GM10248 (cell line): ENCODE measurements at regions of chr17 and their contacts with region 1.

Region 1: DNA sequence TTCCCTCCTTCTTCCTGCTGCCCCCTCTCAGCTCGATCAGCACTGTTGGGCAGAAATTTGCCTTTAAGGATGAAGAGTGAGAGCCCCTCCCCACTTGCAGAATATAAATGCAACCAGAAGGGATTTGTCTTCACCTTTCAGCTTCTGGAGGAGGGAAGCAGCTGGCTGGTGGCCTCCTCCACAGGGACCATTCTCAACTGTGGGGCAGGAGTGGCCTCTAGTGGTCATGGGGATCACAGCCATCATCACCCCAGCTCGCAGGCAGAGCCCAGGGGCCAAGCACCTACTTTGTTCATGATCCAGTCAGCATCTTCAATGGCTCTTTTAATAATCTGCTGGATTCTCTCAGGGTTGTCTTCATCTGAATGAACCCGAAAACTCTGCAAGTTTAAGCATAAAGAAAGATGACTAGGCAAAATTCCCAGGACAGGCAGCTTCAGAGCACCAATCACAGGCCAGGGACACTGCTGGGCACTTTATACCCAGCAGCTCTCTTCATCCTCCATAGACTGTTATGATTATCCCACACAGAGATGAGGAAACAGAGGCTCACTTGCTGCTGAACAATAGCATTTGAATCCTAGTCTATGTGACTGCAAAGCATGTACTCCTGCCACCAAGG is 13.1 kb downstream of the LYRM9 start:
- DNase-seq: peak; percentile 87
- CTCF ChIP-seq: peak; percentile 90

Region 2: GRCh38 chr17:27654654-27655524 is 225.2 kb before region 1 on chr17:
- CTCF ChIA-PET with region 1: interaction called, 23 read pairs
- POLR2A ChIA-PET with region 1: no interaction called
- DNase-seq: peak; percentile 85
- CTCF ChIP-seq: peak; percentile 82

Region 3: GRCh38 chr17:27768858-27769410 is 111.2 kb before region 1 on chr17:
- CTCF ChIA-PET with region 1: interaction called, 287 read pairs
- POLR2A ChIA-PET with region 1: no interaction called
- DNase-seq: no peak
- CTCF ChIP-seq: no peak

Region 4: DNA sequence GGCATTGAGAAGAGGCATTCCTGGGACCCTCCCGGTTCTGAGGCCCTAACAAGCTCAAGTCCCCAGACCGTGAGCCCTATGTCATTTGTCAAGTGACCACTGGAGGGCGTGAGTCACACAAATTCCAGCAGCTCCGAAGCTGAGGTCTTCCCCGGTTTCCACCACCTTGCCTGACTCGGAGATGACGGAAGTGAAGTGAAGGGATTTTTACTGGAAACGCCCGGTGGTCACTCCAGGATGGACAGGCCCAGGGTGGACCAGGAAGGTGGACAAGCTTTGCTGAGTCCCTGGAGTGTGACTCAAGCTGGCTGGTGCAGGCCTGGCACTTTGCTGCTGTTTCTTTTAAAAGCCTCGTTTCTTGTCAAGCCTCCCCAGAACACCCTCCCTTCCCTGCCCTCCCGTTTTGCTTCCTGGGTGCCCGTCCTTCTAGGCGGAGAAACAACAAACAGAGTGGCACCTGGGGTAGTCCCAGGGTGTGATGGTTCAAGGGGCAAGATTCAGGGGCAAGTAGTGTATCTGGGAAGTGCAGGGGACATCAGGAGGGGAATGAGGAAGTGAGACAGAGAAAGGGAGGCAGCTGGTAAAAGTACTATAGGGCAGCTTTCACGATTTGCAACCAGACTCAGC is 74.5 kb before region 1 on chr17:
- CTCF ChIA-PET with region 1: interaction called, 560 read pairs
- POLR2A ChIA-PET with region 1: interaction called, 7 read pairs
- DNase-seq: peak; percentile 82
- CTCF ChIP-seq: peak; percentile 82

Region 5: GRCh38 chr17:27846042-27846655 is 33.9 kb before region 1 on chr17:
- CTCF ChIA-PET with region 1: interaction called, 18 read pairs
- POLR2A ChIA-PET with region 1: no interaction called
- DNase-seq: no peak
- CTCF ChIP-seq: no peak

Region 6: DNA sequence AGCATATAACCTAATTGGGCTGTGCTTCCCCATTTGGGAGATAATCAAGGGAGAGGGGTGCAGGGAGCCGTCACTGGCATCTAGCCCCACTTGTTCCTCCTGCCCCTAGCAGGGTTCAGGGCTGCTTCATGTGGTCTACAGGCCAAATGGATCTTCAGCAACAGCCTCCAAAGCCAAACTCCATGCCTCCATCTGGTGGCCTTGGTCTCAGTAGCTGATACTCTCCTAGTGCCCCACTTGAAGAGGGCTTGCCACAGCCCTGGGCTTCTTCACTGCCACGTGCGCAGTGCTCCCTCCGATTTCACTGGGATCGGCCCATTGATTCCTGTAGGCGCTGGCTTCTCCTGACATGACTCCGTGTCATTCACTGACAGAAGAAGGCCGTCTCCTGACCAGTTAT is 11.5 kb before region 1 on chr17:
- CTCF ChIA-PET with region 1: interaction called, 20 read pairs
- POLR2A ChIA-PET with region 1: no interaction called
- DNase-seq: no peak
- CTCF ChIP-seq: peak; percentile 16

Region 7: DNA sequence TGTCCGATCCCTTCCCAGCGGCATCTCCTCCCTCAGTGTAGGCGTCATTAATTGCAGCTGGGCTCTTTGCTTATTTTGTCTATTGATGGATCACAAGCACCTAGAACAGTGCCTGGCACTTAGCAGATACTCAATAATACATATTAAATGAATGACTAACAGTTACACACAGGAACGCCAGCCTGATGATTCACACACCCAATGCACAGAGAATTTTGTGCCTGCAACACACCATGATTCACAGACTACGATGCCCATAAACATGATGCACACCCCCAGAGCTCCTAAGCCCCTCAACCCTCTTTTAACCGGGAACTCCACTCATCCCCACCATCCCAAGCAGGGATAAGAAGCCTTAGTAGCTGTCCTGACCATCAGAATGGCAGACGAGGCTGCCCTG is 372.3 kb after region 1 on chr17:
- CTCF ChIA-PET with region 1: interaction called, 12 read pairs
- POLR2A ChIA-PET with region 1: no interaction called
- DNase-seq: no peak
- CTCF ChIP-seq: no peak